Sciatic nerve (tissue), 2 donors: ENCODE measurements at regions of chr5 and their contacts with region 1.

Region 1: DNA sequence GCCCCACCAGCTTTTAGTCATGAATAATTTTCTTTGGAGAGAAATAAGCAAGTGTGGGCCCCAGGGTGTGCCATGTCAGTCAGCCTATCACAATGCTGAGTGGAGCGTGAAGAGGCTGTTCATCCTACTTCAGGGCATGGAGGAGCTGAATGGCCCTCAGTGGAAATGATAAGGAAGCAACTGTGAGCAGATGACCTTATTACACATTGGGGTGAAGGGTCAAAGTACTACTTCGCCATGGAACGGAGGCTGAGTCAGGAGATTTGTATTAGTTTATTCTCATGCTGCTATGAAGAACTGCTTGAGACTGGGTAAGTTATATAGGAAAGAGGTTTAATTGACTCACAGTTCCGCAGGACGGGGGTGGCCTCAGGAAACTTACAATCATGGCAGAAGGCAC is 231.0 kb upstream of the ADAMTS16 start:
- DNase-seq: no peak
- ATAC-seq: no peak

Region 2: DNA sequence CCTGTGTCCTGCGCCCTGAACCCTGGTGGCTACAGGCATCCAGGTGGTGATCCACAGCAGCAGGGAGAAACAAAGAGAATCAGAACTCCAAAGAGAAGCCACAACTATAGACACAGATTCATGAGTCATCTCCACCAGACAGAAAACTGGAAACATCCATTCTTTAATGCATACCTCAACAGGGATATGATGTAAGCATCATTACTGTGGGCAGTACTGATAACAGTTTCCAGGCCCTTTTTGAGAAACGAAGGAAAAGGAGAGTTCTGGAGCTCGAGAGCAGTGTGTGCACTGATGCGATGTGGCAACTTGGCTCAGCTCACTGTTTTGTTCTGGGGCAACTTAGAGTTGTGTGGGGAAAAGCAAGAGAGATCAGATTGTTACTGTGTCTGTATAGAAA is 15.5 kb after region 1 on chr5:
- intact Hi-C with region 1: loop called (anchors 2 kb)
- DNase-seq: no peak
- ATAC-seq: no peak